ENCODE measurements at regions of chr5 and their contacts with region 1.

Region 1: GRCh38 chr5:96896806-96897205 is 20.5 kb downstream of the ERAP2 start:
- DNase-seq: peak; percentile 79
- H3K4me3 Mint-ChIP-seq: peak overlapping the region; percentile 79
- H3K27ac Mint-ChIP-seq: peak overlapping the region; percentile 98
- H3K4me1 Mint-ChIP-seq: peaks cover 62% of the 10 kb centered on the region
- H3K27me3 Mint-ChIP-seq: no peaks in the 10 kb centered on the region

Region 2: DNA sequence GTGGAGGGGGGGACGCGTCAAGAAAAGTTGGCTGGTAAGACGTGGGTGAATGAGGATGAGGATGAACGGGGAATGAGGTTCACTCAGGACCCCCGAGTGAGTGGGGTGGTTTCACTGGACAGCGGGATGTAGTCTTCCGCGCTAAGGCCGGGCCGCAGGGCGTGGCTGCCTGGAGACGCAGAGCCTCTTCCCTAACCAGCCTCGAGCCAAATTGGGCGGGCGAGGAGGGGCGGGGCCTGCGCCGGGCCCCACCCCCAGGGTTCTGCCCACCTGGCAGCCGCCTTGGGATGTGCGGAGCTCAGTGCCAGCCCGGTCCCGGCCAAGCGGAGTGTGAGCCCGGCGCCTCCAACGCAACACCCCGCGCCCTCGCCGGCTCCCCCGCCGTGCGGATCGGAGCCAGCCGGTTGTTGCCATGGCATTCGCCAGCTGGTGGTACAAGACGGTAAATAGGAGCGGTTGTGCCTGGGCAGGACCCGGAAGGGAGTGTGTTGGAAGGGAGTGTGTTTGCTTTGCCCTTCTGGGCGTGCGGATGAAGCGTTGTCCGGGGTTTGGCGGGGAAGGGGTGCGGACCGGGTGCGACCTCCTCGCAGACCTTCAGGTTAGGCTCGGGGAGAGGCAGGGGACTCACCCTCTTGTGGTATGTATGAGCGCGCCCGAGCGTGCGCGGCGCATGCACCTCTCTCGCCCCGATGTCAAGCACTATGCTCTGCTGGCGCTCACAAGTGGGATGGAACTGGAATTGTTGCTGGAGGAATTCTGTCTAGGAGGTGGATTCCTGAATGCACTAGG is 233.9 kb before region 1 on chr5:
- CTCF ChIA-PET with region 1: no interaction called
- intact Hi-C with region 1: loop called (anchors 5 kb)
- DNase-seq: peak; percentile 89
- H3K4me3 Mint-ChIP-seq: peak overlapping the region; percentile 96
- H3K27ac Mint-ChIP-seq: peak overlapping the region; percentile 96
- H3K4me1 Mint-ChIP-seq: peaks cover 22% of the 10 kb centered on the region
- H3K27me3 Mint-ChIP-seq: peaks cover 3% of the 10 kb centered on the region

Region 3: DNA sequence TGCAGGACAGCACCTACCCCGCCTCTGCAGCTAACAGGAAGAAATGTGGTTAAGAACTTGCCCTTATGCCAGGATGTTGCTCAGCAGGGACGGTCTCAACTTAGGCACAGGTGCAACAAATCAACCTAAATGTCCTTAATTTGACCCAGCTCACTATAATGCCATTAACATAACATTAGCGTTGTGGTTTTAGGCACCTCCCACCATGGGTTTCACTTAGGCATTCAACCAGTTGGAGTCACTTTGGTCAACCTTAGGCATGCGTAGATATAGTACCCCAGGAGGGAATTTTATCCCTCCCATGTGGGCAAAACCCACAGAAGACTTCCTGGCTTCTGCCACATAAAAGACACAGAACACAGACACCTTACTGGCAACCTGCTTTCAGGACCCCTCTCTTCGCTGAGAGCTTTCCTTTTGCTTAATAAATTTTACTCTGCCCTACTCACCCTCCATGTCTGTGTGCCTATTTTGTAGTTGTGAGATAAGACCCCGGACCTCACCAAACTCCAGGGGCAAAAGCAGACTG is 80.3 kb before region 1 on chr5:
- CTCF ChIA-PET with region 1: no interaction called
- intact Hi-C with region 1: loop called (anchors 1 kb)
- DNase-seq: peak; percentile 84
- H3K4me3 Mint-ChIP-seq: peak overlapping the region; percentile 71
- H3K27ac Mint-ChIP-seq: peak overlapping the region; percentile 91
- H3K4me1 Mint-ChIP-seq: peaks cover 80% of the 10 kb centered on the region
- H3K27me3 Mint-ChIP-seq: no peaks in the 10 kb centered on the region

Region 4: DNA sequence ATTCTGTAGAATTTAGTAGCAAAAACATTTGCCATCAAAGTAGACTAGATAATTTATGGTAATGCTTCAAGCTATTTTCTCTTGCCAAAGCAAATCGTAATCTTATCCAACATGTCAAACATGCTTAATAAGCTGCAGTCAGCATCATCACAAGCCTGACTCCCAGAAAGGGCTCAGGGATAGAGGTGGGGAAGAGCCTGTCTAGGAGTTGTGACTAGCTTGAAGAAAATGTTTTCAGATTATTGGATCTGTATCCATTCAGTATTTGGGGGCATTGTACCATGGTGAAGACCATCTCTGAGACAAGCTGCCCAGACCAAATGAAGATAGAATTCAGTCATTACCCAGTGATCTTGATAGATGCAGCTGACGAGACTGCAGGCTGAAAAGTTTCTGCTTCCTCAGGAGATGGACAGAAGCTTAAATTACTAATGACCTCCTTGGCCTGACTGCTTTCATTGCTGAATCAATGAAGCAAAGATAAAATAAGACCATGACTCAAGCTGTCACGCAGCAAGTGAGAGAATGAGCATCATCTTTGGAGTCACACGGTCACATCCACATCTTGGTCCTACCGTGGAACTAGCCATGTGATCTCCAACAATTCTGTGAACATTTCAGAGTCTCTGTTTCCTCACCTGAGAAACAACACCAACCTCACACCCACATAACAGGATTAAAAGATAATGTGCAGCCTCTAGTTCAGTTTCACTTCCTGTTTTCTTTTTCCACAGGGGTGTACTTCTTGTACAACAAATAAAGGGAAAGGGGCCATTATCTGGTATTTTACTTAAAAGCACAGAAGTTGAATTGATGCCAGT is 11.1 kb before region 1 on chr5:
- CTCF ChIA-PET with region 1: interaction called, 10 read pairs
- intact Hi-C with region 1: loop called (anchors 1 kb)
- DNase-seq: peak; percentile 61
- H3K4me3 Mint-ChIP-seq: peak overlapping the region; percentile 3
- H3K27ac Mint-ChIP-seq: peak overlapping the region; percentile 88
- H3K4me1 Mint-ChIP-seq: peaks cover 71% of the 10 kb centered on the region
- H3K27me3 Mint-ChIP-seq: no peaks in the 10 kb centered on the region

Region 5: DNA sequence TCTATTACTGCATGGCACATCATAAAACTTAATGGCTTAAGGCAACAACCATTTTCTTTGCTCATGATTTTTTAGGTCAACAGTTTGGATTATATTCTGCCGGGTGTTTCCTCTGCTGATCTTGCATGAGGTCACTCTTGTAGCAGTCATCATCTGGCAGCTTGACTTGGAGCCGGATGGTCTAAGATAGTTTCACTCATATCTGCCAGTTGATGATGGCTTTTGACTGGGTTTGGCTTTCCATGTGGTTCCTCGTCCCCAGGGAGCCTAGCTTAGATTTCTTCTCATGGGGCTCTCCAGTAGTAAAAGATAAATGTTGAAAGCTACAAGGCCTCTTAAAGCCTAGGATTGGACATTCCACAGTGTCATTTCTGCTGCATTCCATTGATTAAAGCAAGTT is 66.5 kb after region 1 on chr5:
- CTCF ChIA-PET with region 1: interaction called, 3 read pairs
- intact Hi-C with region 1: loop called (anchors 1 kb)
- DNase-seq: peak; percentile 47
- H3K4me3 Mint-ChIP-seq: peak overlapping the region; percentile 69
- H3K27ac Mint-ChIP-seq: peak overlapping the region; percentile 95
- H3K4me1 Mint-ChIP-seq: peaks cover 73% of the 10 kb centered on the region
- H3K27me3 Mint-ChIP-seq: no peaks in the 10 kb centered on the region